ENCODE measurements at regions of chr11 and their contacts with region 1.

Region 1: GRCh38 chr11:10735481-10736475 is 15.3 kb upstream of the CTR9 start:
- DNase-seq: peak; percentile 93
- ATAC-seq: peak; percentile 100
- H3K4me3 Mint-ChIP-seq: peak overlapping the region; percentile 77
- H3K27ac Mint-ChIP-seq: peak overlapping the region; percentile 83
- H3K4me1 Mint-ChIP-seq: peaks cover 13% of the 10 kb centered on the region
- H3K27me3 Mint-ChIP-seq: no peaks in the 10 kb centered on the region
- CTCF ChIP-seq: peak; percentile 65

Region 2: GRCh38 chr11:10405855-10406592 is 329.8 kb before region 1 on chr11:
- CTCF ChIA-PET with region 1: interaction called, 84 read pairs
- POLR2A ChIA-PET with region 1: no interaction called
- intact Hi-C with region 1: loop called (anchors 1 kb)
- DNase-seq: no peak
- ATAC-seq: peak; percentile 94
- H3K4me3 Mint-ChIP-seq: no peak overlapping the region
- H3K27ac Mint-ChIP-seq: no peak overlapping the region
- H3K4me1 Mint-ChIP-seq: peaks cover 6% of the 10 kb centered on the region
- H3K27me3 Mint-ChIP-seq: no peaks in the 10 kb centered on the region
- CTCF ChIP-seq: peak; percentile 51

Region 3: GRCh38 chr11:10514210-10514609 is 221.6 kb before region 1 on chr11:
- CTCF ChIA-PET with region 1: interaction called, 5 read pairs
- POLR2A ChIA-PET with region 1: interaction called, 3 read pairs
- intact Hi-C with region 1: loop called (anchors 1 kb)
- DNase-seq: no peak
- ATAC-seq: no peak
- H3K4me3 Mint-ChIP-seq: no peak overlapping the region
- H3K27ac Mint-ChIP-seq: no peak overlapping the region
- H3K4me1 Mint-ChIP-seq: peaks cover 16% of the 10 kb centered on the region
- H3K27me3 Mint-ChIP-seq: no peaks in the 10 kb centered on the region
- CTCF ChIP-seq: no peak

Region 4: GRCh38 chr11:10623797-10624761 is 111.7 kb before region 1 on chr11:
- CTCF ChIA-PET with region 1: no interaction called
- POLR2A ChIA-PET with region 1: no interaction called
- intact Hi-C with region 1: loop called (anchors 1 kb)
- DNase-seq: no peak
- ATAC-seq: peak; percentile 9
- H3K4me3 Mint-ChIP-seq: no peak overlapping the region
- H3K27ac Mint-ChIP-seq: peak overlapping the region; percentile 95
- H3K4me1 Mint-ChIP-seq: peaks cover 77% of the 10 kb centered on the region
- H3K27me3 Mint-ChIP-seq: no peaks in the 10 kb centered on the region
- CTCF ChIP-seq: no peak